ENCODE measurements at regions of chr12 and their contacts with region 1.

Region 1: DNA sequence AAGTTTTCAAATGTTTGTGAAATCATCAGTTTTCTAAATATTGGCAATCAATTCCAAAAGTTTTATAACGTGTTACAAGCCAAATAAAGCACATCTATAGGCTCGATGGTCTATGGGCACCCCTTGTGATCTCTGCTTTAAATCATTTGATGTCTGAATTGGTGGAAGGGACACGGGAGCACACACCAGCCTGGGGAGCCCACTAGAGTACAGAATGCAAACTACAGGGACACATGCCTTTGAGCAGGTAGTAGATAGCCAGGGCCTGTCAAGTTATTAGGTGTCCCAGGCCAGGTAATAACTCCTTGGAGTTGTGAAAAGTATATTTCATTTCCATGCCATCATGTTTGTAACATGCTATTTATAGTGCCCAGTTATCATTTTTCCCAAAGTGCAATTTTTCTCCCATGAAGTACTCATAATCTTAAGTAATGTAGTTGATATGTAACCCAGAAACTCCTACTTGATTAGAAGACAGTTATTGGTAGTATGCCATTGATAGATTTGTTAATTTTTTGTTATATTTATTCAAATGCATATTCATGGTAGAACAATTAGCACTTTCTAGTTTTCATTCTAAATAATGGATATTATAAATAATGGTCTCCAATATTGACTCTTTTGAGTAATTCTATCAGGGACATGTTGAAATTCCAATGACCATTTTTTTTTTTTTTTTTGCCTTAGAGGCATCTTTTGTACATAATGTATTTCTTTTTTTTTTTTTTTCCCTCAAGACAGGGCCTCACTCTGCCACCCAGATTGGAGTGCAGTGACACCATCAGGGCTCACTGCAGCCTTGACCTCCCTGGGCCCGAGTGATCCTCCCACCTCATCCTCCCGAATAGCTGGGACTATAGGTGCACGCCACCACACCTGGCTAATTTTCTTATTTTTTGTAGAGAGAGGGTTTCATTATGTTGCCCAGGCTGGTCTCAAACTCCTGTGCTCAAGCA is 96.9 kb upstream of the FGD4 start:
- DNase-seq: peak; percentile 68
- H3K27ac ChIP-seq: no peak overlapping the region
- CTCF ChIP-seq: peak; percentile 62

Region 2: GRCh38 chr12:32120419-32120818 is 182.1 kb before region 1 on chr12:
- CTCF ChIA-PET with region 1: interaction called, 11 read pairs
- POLR2A ChIA-PET with region 1: no interaction called
- DNase-seq: no peak
- H3K27ac ChIP-seq: no peak overlapping the region
- CTCF ChIP-seq: no peak

Region 3: DNA sequence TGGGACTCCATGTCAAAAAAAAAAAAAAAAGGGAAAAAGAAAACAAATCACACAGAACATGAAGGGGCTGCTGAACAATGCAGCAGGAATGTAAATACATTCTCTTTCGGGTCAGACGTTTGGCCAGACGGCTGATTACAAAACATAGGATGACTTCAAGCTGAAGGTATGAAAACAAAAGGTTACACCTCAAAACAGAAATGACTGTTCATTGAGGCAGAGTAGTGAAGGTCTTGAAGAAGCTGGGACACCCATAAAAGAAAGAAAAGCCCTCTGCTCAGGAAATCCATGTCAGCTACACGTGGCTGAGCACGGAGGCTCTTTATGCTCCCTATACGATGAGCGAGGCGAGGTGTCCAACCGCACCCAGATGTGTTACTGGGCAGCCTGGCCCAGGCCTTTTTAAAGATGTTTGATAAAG is 134.6 kb after region 1 on chr12:
- CTCF ChIA-PET with region 1: no interaction called
- POLR2A ChIA-PET with region 1: no interaction called
- DNase-seq: peak; percentile 93
- H3K27ac ChIP-seq: peak overlapping the region; percentile 88
- CTCF ChIP-seq: no peak

Measured in RWPE1 (cell line).